Activated CD4-positive, alpha-beta memory T cell treated with anti-CD3 and anti-CD28 coated beads for 36 hours (primary cell): ENCODE measurements at regions of chr22 and their contacts with region 1.

Region 1: DNA sequence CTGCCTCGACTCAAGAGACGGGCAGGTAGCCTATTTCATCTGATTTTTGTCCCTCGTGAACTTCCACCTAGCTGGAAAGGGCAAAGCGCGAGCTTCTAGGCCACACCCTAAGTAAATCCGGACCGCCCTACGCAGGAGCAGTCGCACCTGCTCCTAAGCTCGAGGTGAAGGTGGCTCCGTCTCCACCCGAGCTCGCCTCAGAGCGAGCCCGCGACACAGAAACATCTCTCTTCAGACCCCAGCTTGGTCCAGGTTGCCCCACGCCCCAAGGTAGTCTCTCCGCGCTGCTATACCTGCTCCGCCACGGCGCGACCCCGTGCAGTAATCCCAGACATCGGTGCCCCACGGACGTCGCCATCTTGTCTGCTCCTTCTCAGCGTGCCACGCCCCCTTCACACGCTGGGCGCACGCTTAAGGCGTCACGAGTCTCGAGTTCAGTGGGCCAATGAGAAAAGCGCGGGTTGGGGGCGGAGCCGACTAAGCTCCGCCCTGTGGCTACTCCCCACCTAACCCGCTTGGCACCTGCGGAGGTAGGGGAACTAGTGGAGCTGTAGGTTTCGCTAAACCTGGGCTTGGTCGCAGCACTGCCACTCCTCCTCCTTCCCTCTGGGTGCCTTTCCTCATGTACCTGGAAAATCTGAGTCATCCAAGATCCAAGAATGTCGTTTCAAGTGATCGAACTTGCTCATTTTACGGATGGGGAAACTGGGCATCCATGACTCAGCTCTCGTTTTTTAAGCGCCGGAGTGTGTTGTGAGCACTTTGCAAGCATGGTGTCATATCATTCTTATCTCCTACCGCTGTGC is at the start of gene PISD:
- DNase-seq: peak; percentile 98
- H3K4me3 Mint-ChIP-seq: peak within 1 kb of the TSS; percentile 98
- H3K27ac Mint-ChIP-seq: peak within 1 kb of the TSS; percentile 94
- H3K4me1 Mint-ChIP-seq: peaks cover 35% of the 10 kb centered on the region
- H3K27me3 Mint-ChIP-seq: peaks cover 2% of the 10 kb centered on the region
- total RNA-seq, gene PISD: 39.4 to 40.2 TPM

Region 2: DNA sequence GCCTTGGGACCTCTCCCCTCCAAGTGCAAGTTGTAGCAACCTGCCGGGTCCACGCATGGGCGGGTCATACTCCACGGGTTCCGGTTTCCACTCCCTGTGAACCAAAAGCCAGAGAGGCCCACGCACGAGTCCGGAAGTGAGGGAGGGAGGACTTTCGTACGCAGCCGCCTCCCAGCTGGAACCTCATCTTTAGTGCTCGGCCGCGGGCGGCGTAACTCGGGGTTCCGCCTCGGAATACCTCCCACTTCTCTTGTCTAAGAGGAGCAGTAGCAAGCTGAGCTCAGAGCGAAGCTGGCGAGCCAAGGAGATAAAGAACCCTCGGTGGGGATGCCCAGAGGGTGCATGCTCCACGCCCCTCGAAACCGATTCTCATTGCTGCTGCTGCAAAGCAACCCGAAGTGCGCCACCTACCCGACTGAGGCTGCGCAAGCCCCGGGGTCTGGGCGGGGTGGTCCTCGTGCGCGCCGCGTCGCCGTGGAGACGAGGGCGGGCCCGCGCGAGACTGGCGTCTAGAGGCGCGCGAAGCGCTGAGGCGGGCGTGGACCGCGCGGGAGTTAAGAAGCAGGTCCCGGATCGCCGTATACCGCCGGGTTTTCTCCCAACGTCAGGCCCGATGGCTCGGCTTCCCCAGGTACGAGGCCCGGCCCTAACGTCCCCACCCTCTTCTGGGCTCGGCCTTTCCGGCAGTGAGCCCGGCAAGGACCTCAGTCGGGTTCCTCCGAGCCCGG is 165.9 kb before region 1 on chr22 and contains the start of gene SFI1:
- CTCF ChIA-PET with region 1: interaction called, 3 read pairs
- POLR2A ChIA-PET with region 1: no interaction called
- intact Hi-C with region 1: loop called (anchors 1 kb)
- DNase-seq: peak; percentile 96
- H3K4me3 Mint-ChIP-seq: peak within 1 kb of the TSS; percentile 92
- H3K27ac Mint-ChIP-seq: peak within 1 kb of the TSS; percentile 94
- H3K4me1 Mint-ChIP-seq: peaks cover 50% of the 10 kb centered on the region
- H3K27me3 Mint-ChIP-seq: no peaks in the 10 kb centered on the region
- total RNA-seq, gene SFI1: 227 to 240 TPM

Region 3: GRCh38 chr22:31676700-31677099 is 14.6 kb after region 1 on chr22:
- CTCF ChIA-PET with region 1: interaction called, 75 read pairs
- POLR2A ChIA-PET with region 1: interaction called, 15 read pairs
- intact Hi-C with region 1: loop called (anchors 1 kb)
- DNase-seq: peak; percentile 96
- H3K4me3 Mint-ChIP-seq: peak overlapping the region; percentile 74
- H3K27ac Mint-ChIP-seq: peak overlapping the region; percentile 72
- H3K4me1 Mint-ChIP-seq: peaks cover 13% of the 10 kb centered on the region
- H3K27me3 Mint-ChIP-seq: no peaks in the 10 kb centered on the region

Region 4: DNA sequence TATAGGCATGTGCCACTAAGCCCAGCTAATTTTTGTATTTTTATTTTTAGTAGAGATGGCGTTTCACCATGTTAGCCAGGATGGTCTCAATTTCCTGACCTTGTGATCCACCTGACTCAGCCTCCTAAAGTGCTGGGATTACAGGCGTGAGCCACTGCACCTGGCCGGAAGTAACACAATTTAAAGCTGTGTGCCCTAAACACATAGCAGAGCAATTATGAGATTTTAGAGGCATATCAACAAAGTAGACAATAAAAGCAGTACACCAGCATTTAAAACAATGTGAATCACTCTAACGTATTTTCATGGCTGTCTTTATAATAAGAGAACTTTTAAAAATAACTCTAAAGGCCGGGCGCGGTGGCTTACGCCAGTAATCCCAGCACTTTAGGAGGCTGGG is 45.5 kb after region 1 on chr22:
- CTCF ChIA-PET with region 1: no interaction called
- POLR2A ChIA-PET with region 1: no interaction called
- intact Hi-C with region 1: no loop called
- DNase-seq: no peak
- H3K4me3 Mint-ChIP-seq: no peak overlapping the region
- H3K27ac Mint-ChIP-seq: no peak overlapping the region
- H3K4me1 Mint-ChIP-seq: no peaks in the 10 kb centered on the region
- H3K27me3 Mint-ChIP-seq: no peaks in the 10 kb centered on the region

Region 5: GRCh38 chr22:31943976-31944699 is 282.1 kb after region 1 on chr22 and contains the start of gene YWHAH:
- CTCF ChIA-PET with region 1: interaction called, 39 read pairs
- POLR2A ChIA-PET with region 1: interaction called, 3 read pairs
- intact Hi-C with region 1: loop called (anchors 1 kb)
- DNase-seq: peak; percentile 95
- H3K4me3 Mint-ChIP-seq: no peak within 1 kb of the TSS
- H3K27ac Mint-ChIP-seq: peak within 1 kb of the TSS; percentile 88
- H3K4me1 Mint-ChIP-seq: peaks cover 22% of the 10 kb centered on the region
- H3K27me3 Mint-ChIP-seq: no peaks in the 10 kb centered on the region
- total RNA-seq, gene YWHAH: 137 to 142 TPM

Region 6: DNA sequence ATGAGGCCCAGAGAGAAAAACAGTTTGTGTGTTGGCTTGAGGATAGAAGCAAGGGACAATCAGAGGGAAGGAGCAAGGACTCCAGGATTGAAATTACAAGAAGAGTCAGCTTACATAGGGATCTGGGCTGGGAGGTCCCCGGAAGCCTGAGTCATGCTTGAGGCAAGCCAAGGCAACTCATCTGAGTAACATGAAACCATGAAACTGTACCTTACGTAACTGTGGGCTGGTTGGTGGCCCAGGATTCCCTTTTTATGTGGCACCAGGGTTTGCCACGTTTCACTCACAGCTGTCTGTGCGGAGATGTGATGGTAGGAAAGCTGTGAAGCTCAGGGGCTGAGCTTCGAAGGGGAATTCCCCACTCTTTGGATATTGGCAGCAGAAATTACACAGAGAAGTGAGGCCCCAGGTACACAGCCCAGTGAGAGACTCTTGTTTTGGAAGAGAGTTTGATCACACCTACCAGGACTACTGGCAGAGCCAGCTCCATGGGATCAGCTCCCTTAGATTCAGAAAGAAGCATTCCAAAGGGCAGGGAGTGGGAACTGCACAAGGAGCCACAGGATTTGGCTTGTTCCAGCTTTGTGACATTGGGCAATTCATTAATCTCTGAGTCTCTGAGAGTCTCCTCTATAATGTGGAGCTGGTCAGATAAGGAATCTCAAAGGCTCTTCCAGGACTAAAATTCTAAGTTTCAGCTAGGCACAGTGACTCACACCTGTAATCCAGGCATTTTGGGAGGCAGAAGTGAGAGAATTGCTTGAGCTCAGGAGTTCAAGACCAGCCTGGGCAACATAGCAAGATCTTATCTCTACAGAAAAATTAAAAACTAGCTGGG is 388.8 kb after region 1 on chr22:
- CTCF ChIA-PET with region 1: interaction called, 3 read pairs
- POLR2A ChIA-PET with region 1: no interaction called
- intact Hi-C with region 1: loop called (anchors 10 kb)
- DNase-seq: peak; percentile 94
- H3K4me3 Mint-ChIP-seq: no peak overlapping the region
- H3K27ac Mint-ChIP-seq: peak overlapping the region; percentile 26
- H3K4me1 Mint-ChIP-seq: peaks cover 20% of the 10 kb centered on the region
- H3K27me3 Mint-ChIP-seq: peaks cover 52% of the 10 kb centered on the region

Region 7: GRCh38 chr22:32474635-32475467 is 812.8 kb after region 1 on chr22 and contains the start of gene FBXO7:
- CTCF ChIA-PET with region 1: no interaction called
- POLR2A ChIA-PET with region 1: no interaction called
- intact Hi-C with region 1: loop called (anchors 10 kb)
- DNase-seq: peak; percentile 90
- H3K4me3 Mint-ChIP-seq: peak within 1 kb of the TSS; percentile 85
- H3K27ac Mint-ChIP-seq: peak within 1 kb of the TSS; percentile 90
- H3K4me1 Mint-ChIP-seq: peaks cover 21% of the 10 kb centered on the region
- H3K27me3 Mint-ChIP-seq: no peaks in the 10 kb centered on the region
- total RNA-seq, gene FBXO7: 79.5 to 83.3 TPM